ENCODE measurements at regions of chr19 and their contacts with region 1.

Region 1: DNA sequence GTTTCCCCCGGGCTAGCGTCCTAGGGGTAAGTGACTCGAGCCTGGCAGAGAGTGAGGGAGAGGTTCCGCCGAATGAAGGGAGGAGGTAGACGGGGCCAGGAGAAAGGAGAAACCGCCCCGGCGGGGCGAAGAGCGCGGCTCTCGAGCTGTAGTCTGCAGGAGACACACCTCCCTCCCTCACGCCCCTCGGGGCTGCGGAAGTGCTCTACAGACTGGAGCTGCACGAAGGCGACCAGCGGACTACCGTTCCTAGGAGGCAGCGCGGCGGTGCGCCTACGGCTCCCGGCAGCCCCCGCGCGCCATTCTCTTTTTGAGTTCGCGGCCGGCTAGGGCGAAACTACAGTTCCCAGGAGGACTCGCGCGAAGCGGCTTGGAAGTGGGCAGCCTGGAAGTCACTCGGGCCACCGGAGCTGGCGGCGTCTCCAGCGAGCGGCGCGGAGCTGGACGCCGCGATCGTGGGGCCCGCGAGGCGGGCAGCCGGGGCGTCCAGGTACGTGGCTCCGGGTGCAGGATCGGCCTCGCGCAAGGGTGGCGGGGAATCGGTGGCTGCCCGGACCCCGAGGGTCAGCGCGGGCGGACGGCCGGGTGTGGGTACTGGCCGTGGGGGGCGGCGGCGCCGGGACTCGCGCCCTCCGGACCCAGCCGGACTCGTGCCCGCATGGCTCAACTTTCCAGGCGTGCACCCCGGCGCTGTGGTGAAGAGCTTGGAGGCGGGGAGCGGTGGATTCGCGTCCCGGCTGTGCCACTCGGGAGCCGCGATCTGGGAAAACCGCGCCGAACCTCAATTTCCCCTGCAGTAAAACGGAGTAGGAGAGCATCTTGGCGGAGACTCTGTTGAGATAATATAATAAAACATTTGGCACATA is at the start of gene SIPA1L3:
- DNase-seq: peak; percentile 95
- H3K4me3 Mint-ChIP-seq: peak within 1 kb of the TSS; percentile 77
- H3K27ac Mint-ChIP-seq: peak within 1 kb of the TSS; percentile 59
- H3K4me1 Mint-ChIP-seq: peaks cover 20% of the 10 kb centered on the region
- H3K27me3 Mint-ChIP-seq: no peaks in the 10 kb centered on the region
- total RNA-seq, gene SIPA1L3: 8.1 to 10.4 TPM

Region 2: GRCh38 chr19:36973021-36973843 is 933.9 kb before region 1 on chr19:
- CTCF ChIA-PET with region 1: no interaction called
- intact Hi-C with region 1: loop called (anchors 5 kb)
- DNase-seq: peak; percentile 91
- H3K4me3 Mint-ChIP-seq: peak overlapping the region; percentile 92
- H3K27ac Mint-ChIP-seq: peak overlapping the region; percentile 95
- H3K4me1 Mint-ChIP-seq: peaks cover 11% of the 10 kb centered on the region
- H3K27me3 Mint-ChIP-seq: no peaks in the 10 kb centered on the region

Region 3: DNA sequence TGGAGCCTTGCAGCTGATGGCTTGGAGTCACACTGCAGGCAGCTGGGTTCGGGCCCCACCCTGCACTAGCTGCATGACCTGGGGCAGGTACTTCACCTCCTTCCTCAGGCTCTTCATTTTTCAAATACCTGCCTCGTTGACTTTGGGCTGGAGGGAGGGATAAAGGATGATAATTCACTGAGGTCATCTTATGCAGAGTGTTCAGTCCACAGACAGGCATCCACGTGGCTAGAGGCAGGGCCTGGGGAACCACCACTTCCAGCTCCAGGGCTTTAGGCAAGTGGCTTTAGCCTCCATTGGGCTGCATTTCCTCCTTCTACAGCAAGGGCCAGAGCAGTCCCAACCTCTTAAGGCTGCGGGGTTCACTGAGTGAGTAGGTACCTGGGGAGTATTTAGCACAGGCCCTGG is 84.7 kb after region 1 on chr19:
- CTCF ChIA-PET with region 1: no interaction called
- intact Hi-C with region 1: no loop called
- DNase-seq: no peak
- H3K4me3 Mint-ChIP-seq: no peak overlapping the region
- H3K27ac Mint-ChIP-seq: no peak overlapping the region
- H3K4me1 Mint-ChIP-seq: peaks cover 6% of the 10 kb centered on the region
- H3K27me3 Mint-ChIP-seq: no peaks in the 10 kb centered on the region

Region 4: DNA sequence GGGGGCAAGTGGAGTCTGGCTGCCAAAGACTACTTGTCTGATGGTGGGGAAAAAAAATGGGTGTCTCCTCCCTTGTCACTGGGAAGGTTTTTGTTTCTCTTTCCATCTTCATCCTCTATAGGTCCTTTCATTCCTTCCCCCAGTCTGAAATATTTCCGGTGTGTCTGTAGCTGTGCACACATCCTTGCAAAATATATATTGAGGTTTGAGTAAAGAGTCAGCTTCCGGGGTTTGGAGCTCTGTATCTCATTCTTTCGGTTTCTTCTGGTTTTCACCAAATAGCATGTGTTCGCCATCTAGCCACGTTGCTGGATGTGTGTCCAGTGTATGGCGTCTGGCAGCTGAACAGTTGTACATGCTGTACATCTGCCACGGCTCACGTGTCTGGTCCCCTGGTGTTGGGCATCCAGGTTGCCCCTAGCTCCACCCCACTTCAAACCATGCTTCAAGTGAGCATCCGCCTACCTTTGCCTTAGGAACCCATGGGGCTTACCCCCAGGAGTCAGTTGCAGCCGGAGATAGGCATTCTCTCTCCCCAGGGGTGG is 142.1 kb after region 1 on chr19:
- CTCF ChIA-PET with region 1: interaction called, 7 read pairs
- intact Hi-C with region 1: loop called (anchors 1 kb)
- DNase-seq: peak; percentile 67
- H3K4me3 Mint-ChIP-seq: peak overlapping the region; percentile 73
- H3K27ac Mint-ChIP-seq: peak overlapping the region; percentile 96
- H3K4me1 Mint-ChIP-seq: peaks cover 43% of the 10 kb centered on the region
- H3K27me3 Mint-ChIP-seq: no peaks in the 10 kb centered on the region

Region 5: GRCh38 chr19:38095411-38096308 is 188.6 kb after region 1 on chr19:
- CTCF ChIA-PET with region 1: interaction called, 23 read pairs
- intact Hi-C with region 1: loop called (anchors 1 kb)
- DNase-seq: peak; percentile 77
- H3K4me3 Mint-ChIP-seq: no peak overlapping the region
- H3K27ac Mint-ChIP-seq: no peak overlapping the region
- H3K4me1 Mint-ChIP-seq: no peaks in the 10 kb centered on the region
- H3K27me3 Mint-ChIP-seq: no peaks in the 10 kb centered on the region

Region 6: DNA sequence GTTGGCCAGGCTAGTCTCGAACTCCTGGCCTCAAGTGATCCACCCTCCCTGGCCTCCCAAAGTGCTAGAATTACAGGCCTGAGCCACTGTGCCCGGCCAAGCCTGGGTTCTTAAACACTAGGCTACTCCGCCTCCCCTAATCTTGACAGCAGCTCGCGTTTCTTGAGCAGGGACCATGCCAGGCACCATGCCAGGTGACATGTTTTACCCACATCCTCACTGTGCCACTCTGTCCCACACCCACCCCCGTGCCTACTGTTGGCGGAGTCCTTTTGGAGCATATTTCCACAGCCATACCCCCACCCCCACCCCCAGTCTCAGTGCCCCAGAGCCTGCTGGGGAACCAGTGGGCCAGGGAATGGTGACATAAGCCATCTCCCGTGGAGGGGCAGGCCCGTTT is 218.1 kb after region 1 on chr19:
- CTCF ChIA-PET with region 1: no interaction called
- intact Hi-C with region 1: no loop called
- DNase-seq: no peak
- H3K4me3 Mint-ChIP-seq: no peak overlapping the region
- H3K27ac Mint-ChIP-seq: no peak overlapping the region
- H3K4me1 Mint-ChIP-seq: no peaks in the 10 kb centered on the region
- H3K27me3 Mint-ChIP-seq: no peaks in the 10 kb centered on the region

Region 7: DNA sequence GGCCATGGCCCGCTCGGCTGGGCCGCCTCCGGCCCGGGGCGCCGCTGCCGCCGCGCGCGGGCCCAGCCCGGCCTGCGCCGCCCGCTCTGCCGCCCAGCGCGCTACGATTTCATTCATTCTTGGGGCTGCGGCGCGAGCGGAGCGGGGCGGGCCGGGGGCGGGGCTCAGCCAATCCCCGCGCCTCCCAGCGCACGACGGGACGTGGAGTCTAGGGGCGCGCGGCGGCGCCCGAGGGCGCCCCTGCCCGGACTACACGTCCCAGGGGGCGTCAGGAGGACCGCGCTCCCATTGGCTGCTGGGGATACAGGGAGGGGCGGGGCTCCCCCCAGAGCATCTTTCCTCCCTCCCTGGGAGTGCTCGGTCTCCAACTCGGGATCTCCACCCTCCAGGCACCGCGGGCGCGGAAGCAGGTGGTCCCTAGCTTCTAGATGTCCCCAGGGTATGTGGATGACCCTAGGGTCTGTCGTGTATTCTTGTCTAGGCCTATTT is 322.5 kb after region 1 on chr19:
- CTCF ChIA-PET with region 1: interaction called, 6 read pairs
- intact Hi-C with region 1: loop called (anchors 1 kb)
- DNase-seq: peak; percentile 71
- H3K4me3 Mint-ChIP-seq: no peak overlapping the region
- H3K27ac Mint-ChIP-seq: no peak overlapping the region
- H3K4me1 Mint-ChIP-seq: peaks cover 15% of the 10 kb centered on the region
- H3K27me3 Mint-ChIP-seq: peaks cover 54% of the 10 kb centered on the region

Region 8: DNA sequence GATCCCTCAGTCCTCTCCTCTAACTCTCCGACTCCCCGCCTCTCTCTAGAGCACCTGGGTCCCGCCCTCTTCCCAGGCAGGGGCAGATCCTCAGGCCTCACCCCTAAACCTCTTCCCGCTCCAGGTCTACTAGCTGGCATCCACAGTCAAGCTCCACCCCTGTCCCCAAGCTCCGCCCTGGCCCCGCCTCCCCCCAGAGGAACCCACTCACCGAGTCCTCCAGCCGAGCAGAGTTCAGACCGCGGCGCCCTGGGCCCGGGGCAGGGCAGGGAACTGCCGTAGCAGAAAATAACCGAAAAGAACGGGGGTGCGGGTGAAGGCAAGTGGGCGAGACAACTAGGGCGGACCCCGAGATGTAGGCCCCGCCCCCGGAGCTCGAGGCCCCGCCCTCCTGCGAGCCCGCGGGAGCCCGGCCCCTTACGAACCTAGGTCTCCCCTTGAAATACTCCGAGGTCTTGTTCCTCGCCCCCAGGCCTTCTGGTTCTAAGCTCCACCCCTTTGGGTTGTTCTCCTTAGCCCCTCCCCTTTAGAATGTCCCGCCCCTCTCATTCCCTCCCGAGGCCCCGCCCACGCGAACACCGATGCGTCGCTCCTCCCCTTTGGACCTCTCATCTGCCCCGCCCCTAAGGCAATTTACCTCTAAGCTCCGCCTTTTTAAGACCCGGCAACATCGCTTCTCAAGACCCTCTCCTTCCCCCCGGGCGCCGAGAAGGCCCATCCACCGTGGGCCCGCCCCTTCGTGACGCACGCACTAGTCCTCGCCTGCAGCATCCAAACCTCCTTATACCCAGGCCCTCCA is 480.6 kb after region 1 on chr19 and contains the start of gene GGN:
- CTCF ChIA-PET with region 1: no interaction called
- intact Hi-C with region 1: loop called (anchors 10 kb)
- DNase-seq: peak; percentile 87
- H3K4me3 Mint-ChIP-seq: peak within 1 kb of the TSS; percentile 78
- H3K27ac Mint-ChIP-seq: no peak within 1 kb of the TSS
- H3K4me1 Mint-ChIP-seq: peaks cover 22% of the 10 kb centered on the region
- H3K27me3 Mint-ChIP-seq: peaks cover 18% of the 10 kb centered on the region
- total RNA-seq, gene GGN: 0.26 to 0.40 TPM

Measured in activated naive CD4-positive, alpha-beta T cell treated with anti-CD3 and anti-CD28 coated beads for 36 hours (primary cell).